H1 (cell line): ENCODE measurements at regions of chr9 and their contacts with region 1.

Region 1: GRCh38 chr9:21741151-21741550 is 61.3 kb upstream of the MTAP start:
- DNase-seq: no peak
- H3K4me3 ChIP-seq: no peak overlapping the region
- H3K27ac ChIP-seq: no peak overlapping the region
- H3K4me1 ChIP-seq: no peaks in the 10 kb centered on the region
- H3K27me3 ChIP-seq: peaks cover 9 to 53% (median 29%) of the 10 kb centered on the region in 4 experiments
- CTCF ChIP-seq: no peak
- EP300 ChIP-seq: no peak
- POLR2A ChIP-seq: no peak
- RAD21 ChIP-seq: no peak

Region 2: GRCh38 chr9:21728781-21729180 is 12.4 kb before region 1 on chr9:
- CTCF ChIA-PET with region 1: interaction called, 16 read pairs
- POLR2A ChIA-PET with region 1: no interaction called
- DNase-seq: no peak
- H3K4me3 ChIP-seq: no peak overlapping the region
- H3K27ac ChIP-seq: no peak overlapping the region
- H3K4me1 ChIP-seq: no peaks in the 10 kb centered on the region
- H3K27me3 ChIP-seq: no peaks in the 10 kb centered on the region
- CTCF ChIP-seq: no peak
- EP300 ChIP-seq: no peak
- POLR2A ChIP-seq: no peak
- RAD21 ChIP-seq: no peak

Region 3: GRCh38 chr9:21812946-21813568 is 71.9 kb after region 1 on chr9:
- CTCF ChIA-PET with region 1: no interaction called
- POLR2A ChIA-PET with region 1: no interaction called
- DNase-seq: peak in 1 of 2 experiments; percentile 81
- H3K4me3 ChIP-seq: no peak overlapping the region
- H3K27ac ChIP-seq: no peak overlapping the region
- H3K4me1 ChIP-seq: peaks cover 0 to 2% (median under 1%) of the 10 kb centered on the region in 4 experiments; a peak in 2 of 7 replicates
- H3K27me3 ChIP-seq: no peaks in the 10 kb centered on the region
- CTCF ChIP-seq: peak; percentile 80 to 98 (median 88)
- EP300 ChIP-seq: no peak
- POLR2A ChIP-seq: no peak
- RAD21 ChIP-seq: peak; percentile 84 to 88